ENCODE measurements at regions of chr7 and their contacts with region 1.

Region 1: GRCh38 chr7:100819551-100819950 is 7.8 kb downstream of the EPHB4 start:
- DNase-seq: no peak
- H3K4me3 ChIP-seq: no peak overlapping the region
- H3K27ac ChIP-seq: no peak overlapping the region
- H3K4me1 ChIP-seq: no peaks in the 10 kb centered on the region
- H3K27me3 ChIP-seq: no peaks in the 10 kb centered on the region
- CTCF ChIP-seq: no peak
- POLR2A ChIP-seq: no peak

Region 2: DNA sequence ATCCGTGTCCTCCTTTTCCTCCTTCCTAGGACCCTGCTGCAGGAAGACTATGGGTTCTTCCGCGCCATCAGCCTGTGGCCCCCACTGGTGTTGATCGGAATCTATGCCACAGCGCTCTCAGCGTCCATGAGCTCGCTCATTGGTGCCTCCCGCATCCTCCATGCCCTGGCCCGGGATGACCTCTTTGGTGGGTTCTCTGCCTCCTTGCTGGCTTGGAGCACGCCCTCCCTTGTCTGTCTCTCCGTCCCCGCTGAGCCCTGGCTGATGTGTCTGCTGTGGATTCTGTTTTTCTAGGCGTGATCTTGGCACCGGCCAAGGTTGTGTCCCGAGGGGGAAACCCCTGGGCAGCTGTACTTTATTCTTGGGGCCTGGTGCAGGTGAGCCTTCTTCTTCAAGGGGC is 40.3 kb after region 1 on chr7:
- intact Hi-C with region 1: loop called (anchors 1 kb)
- DNase-seq: no peak
- H3K4me3 ChIP-seq: no peak overlapping the region
- H3K27ac ChIP-seq: no peak overlapping the region
- H3K4me1 ChIP-seq: no peaks in the 10 kb centered on the region
- H3K27me3 ChIP-seq: no peaks in the 10 kb centered on the region
- CTCF ChIP-seq: no peak
- POLR2A ChIP-seq: no peak

Region 3: GRCh38 chr7:101911800-101912715 is 1092.5 kb after region 1 on chr7:
- intact Hi-C with region 1: no loop called
- DNase-seq: peak in 1 of 2 donors; percentile 24
- H3K4me3 ChIP-seq: no peak overlapping the region
- H3K27ac ChIP-seq: peak overlapping the region in 1 of 2 donors; percentile 56
- H3K4me1 ChIP-seq: no peaks in the 10 kb centered on the region
- H3K27me3 ChIP-seq: no peaks in the 10 kb centered on the region
- CTCF ChIP-seq: no peak
- POLR2A ChIP-seq: no peak